ENCODE measurements at regions of chr9 and their contacts with region 1.

Region 1: DNA sequence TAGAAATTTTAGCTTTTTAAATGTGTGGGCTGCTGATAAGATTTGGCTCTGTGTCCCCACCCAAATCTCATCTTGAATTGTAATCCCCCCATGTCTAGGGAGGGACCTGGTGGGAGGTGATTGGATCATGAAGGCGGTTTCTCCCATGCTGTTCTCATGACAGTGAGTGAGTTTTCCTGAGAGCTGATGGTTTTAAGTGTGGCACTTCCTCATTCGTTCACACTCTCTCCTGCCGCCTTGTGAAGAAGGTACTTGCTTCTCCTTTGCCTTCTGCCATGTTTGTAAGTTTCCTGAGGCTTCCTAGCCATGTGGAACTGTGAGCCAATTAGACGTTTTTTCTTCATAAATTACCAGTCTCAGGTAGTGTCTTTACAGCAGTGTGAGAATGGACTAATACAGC is 127.8 kb upstream of the MVB12B start:
- DNase-seq: no peak
- ATAC-seq: no peak
- H3K4me3 ChIP-seq: no peak overlapping the region
- H3K27ac ChIP-seq: no peak overlapping the region
- H3K4me1 ChIP-seq: no peaks in the 10 kb centered on the region
- H3K27me3 ChIP-seq: peaks cover 11% of the 10 kb centered on the region
- CTCF ChIP-seq: no peak
- POLR2A ChIP-seq: no peak
- RAD21 ChIP-seq: no peak

Region 2: DNA sequence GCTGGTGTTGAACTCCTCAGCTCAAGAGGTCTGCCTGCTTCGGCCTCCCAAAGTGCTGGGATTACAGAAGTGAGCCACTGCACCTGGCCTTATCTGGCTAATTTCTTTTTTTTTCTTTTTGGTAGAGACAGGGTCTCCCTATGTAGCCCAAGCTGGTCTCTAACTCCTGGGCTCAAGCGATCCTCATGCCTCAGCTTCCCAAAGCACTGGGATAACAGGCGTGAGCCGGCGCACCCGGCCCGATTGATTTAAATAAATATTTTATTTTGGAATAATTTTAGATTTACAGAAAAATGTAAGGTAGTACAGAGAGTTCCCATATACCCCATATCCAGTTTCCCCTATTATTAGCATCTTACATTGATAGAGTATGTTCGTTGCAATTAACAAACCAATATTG is 27.2 kb before region 1 on chr9:
- CTCF ChIA-PET with region 1: no interaction called
- POLR2A ChIA-PET with region 1: interaction called, 14 read pairs
- dilution Hi-C with region 1: no loop called
- in situ Hi-C with region 1: no loop called
- intact Hi-C with region 1: no loop called
- DNase-seq: no peak
- ATAC-seq: no peak
- H3K4me3 ChIP-seq: no peak overlapping the region
- H3K27ac ChIP-seq: no peak overlapping the region
- H3K4me1 ChIP-seq: no peaks in the 10 kb centered on the region
- H3K27me3 ChIP-seq: peaks cover 10% of the 10 kb centered on the region
- CTCF ChIP-seq: no peak
- POLR2A ChIP-seq: no peak
- RAD21 ChIP-seq: no peak

Region 3: GRCh38 chr9:126398403-126399058 is 199.7 kb after region 1 on chr9:
- CTCF ChIA-PET with region 1: no interaction called
- POLR2A ChIA-PET with region 1: no interaction called
- dilution Hi-C with region 1: no loop called
- in situ Hi-C with region 1: no loop called
- intact Hi-C with region 1: no loop called
- DNase-seq: peak; percentile 52
- ATAC-seq: peak; percentile 91
- H3K4me3 ChIP-seq: no peak overlapping the region
- H3K27ac ChIP-seq: no peak overlapping the region
- H3K4me1 ChIP-seq: peaks cover 8% of the 10 kb centered on the region
- H3K27me3 ChIP-seq: no peaks in the 10 kb centered on the region
- CTCF ChIP-seq: peak; percentile 97
- POLR2A ChIP-seq: no peak
- RAD21 ChIP-seq: peak; percentile 97